MCF 10A (cell line): ENCODE measurements at regions of chr6 and their contacts with region 1.

Region 1: DNA sequence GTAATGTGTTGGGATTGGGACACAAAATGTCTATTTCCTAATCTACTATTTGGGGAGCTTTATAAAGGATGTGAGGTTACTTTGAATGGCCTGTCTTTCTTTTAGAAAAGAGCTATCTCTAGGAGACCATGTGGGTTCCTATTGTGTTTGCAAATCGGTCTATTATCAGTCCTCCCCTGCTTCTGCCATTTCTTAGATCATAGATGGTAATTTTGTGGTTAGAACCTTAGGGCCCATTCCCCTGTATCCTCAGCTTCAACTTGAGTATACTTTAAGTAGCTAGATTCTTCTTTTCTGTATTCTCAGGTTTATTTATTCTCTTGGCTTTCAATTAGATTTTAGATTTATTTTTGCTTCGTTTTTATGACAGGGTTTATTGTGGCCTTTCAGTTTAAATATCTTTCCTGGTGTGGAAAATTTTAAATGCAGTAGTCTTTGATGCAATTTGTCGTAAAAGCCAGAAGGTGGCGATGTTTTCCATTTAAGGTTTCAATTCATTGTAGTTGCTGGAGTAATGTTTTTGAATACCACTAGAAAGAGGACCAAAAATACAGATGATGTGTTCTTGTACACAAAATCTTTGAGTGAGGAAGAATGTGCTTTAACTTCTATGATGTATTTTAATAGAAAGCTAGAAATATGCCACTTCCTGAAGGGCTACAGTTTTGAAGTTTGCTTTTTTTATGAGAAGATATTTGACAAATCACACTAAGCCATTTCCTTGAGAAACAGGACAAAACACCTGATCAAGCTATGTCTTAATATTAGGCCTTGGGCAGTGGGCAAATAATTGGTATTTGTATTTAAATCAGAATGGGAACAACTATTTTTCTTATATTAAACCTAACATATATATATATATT is 20.3 kb downstream of the TBPL1 start:
- DNase-seq: peak; percentile 67
- H3K4me3 Mint-ChIP-seq: no peak overlapping the region
- H3K27ac Mint-ChIP-seq: no peak overlapping the region
- H3K4me1 Mint-ChIP-seq: peaks cover 13% of the 10 kb centered on the region
- H3K27me3 Mint-ChIP-seq: no peaks in the 10 kb centered on the region
- CTCF ChIP-seq: peak; percentile 38

Region 2: GRCh38 chr6:133945158-133945557 is 28.2 kb before region 1 on chr6:
- CTCF ChIA-PET with region 1: interaction called, 15 read pairs
- POLR2A ChIA-PET with region 1: no interaction called
- intact Hi-C with region 1: no loop called
- DNase-seq: peak; percentile 27
- H3K4me3 Mint-ChIP-seq: no peak overlapping the region
- H3K27ac Mint-ChIP-seq: no peak overlapping the region
- H3K4me1 Mint-ChIP-seq: no peaks in the 10 kb centered on the region
- H3K27me3 Mint-ChIP-seq: no peaks in the 10 kb centered on the region
- CTCF ChIP-seq: no peak

Region 3: DNA sequence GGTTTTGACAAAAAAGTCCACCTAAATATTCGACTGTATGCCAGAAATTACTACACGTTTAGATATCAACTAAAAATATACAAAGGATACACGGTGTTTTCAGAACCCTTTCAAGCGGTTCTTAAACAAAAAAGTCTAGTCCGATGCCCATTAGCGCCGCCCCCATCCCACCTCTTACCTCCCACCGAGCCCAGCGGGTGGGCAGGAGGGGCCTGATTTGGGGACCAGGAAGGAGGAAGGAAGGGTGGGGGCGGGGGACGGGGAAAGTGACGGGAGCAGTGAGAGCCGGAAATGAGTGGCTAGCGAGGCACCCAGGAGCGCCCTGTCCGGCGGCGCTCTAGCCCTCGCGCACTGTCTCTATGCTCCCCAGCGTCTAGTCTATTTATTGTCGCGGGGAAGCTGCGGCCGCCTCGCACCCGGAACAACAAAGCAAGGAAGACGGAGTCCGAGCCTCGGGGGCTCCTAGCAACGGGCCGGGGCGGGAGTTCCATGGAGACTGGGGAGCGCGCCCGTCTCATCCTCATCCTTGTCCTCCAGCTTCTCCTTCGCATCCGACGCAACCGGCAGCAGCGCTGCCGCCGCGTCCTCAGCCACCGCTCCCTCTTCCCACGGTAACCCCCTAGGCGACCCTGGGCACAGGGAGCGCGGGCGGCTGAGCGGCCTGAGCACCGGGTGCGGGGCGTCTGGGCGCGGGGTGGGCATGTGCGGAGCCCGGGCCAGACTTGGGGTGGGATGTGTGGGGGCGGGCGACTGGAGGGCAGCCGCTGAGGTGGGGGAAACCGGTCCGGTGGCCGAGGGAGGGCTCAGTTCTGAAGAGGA is 20.3 kb before region 1 on chr6 and contains the start of gene TBPL1:
- CTCF ChIA-PET with region 1: interaction called, 6 read pairs
- POLR2A ChIA-PET with region 1: interaction called, 10 read pairs
- intact Hi-C with region 1: loop called (anchors 2 kb)
- DNase-seq: peak; percentile 95
- H3K4me3 Mint-ChIP-seq: peak within 1 kb of the TSS; percentile 94
- H3K27ac Mint-ChIP-seq: peak within 1 kb of the TSS; percentile 88
- H3K4me1 Mint-ChIP-seq: peaks cover 36% of the 10 kb centered on the region
- H3K27me3 Mint-ChIP-seq: no peaks in the 10 kb centered on the region
- CTCF ChIP-seq: no peak
- total RNA-seq, gene TBPL1: 40.9 and 51.8 TPM in 2 replicates

Region 4: GRCh38 chr6:134057478-134057877 is 84.1 kb after region 1 on chr6:
- CTCF ChIA-PET with region 1: interaction called, 179 read pairs
- POLR2A ChIA-PET with region 1: interaction called, 35 read pairs
- intact Hi-C with region 1: no loop called
- DNase-seq: peak; percentile 76
- H3K4me3 Mint-ChIP-seq: no peak overlapping the region
- H3K27ac Mint-ChIP-seq: peak overlapping the region; percentile 18
- H3K4me1 Mint-ChIP-seq: peaks cover 19% of the 10 kb centered on the region
- H3K27me3 Mint-ChIP-seq: no peaks in the 10 kb centered on the region
- CTCF ChIP-seq: no peak

Region 5: DNA sequence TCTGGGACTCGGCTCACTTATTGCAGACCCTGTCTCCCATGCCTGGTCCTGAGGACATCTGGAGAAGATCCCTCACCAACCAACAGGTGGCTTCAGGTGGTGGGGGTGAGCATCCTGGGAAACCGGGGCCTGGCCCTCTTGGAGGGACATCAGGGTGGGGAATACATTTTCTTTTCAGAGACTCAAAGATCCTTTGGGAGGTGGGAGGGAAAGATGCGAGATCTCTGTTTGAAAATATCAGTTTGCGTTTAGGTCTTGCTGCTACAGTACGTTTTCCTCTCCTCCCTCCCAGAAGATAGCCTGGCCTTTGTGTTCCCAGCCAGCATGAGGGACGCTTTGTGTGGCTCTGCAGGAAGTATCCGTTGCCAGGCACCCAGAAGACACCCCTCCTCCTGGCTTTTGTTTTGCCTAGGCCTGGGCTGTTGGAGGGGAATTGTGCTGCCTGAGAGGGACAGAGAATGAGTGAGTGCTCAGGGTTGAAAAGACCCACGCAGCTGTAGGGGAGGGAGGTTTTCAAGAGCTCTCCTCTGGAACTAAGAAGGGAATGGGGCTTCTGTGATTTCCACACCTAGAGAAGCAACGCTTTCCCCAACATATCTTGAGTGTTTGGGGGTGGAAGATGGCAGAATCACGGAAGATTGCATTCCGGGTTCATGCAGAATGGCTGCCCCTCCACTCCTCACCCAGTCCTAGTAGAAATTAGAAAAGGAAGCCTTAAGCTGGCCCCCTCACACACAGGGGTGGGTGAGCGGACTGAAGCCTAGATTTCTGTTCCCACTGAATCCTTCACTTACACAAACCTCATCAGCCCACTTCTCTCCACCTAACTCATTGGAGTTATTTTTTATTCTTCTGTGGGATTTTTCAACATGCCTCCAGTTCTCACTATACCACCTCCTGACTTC is 101.1 kb after region 1 on chr6:
- CTCF ChIA-PET with region 1: interaction called, 13 read pairs
- POLR2A ChIA-PET with region 1: interaction called, 3 read pairs
- intact Hi-C with region 1: no loop called
- DNase-seq: no peak
- H3K4me3 Mint-ChIP-seq: no peak overlapping the region
- H3K27ac Mint-ChIP-seq: no peak overlapping the region
- H3K4me1 Mint-ChIP-seq: no peaks in the 10 kb centered on the region
- H3K27me3 Mint-ChIP-seq: no peaks in the 10 kb centered on the region
- CTCF ChIP-seq: no peak